Dendritic cell treated with granulocyte-macrophage colony-stimulating factor and Interleukin-4, amounts not matched to agents 40 ng/mL and 50 ng/mL, for 4 days (primary cell): ENCODE measurements at regions of chr15 and their contacts with region 1.

Region 1: DNA sequence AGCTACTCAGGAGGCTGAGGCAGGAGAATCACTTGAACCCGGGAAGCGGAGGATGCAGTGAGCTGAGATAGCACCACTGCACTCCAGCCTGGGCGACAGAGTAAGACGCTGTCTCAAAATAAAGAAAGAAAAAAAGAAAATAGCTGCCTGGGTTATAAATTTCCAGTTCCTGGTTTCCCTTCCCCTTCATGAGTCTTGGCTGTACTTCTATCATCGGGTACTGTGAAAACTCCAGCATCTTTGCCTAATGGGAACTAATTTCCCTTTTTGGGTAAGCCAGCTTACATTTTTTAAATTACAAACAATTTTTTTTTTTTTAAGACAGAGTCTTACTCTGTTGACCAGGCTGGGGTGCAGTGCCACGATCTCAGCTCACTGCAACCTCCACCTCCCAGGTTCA is 15.0 kb downstream of the DENND4A start:
- H3K4me3 Mint-ChIP-seq: peak overlapping the region; percentile 67
- H3K27ac Mint-ChIP-seq: peak overlapping the region; percentile 87
- H3K4me1 Mint-ChIP-seq: peaks cover 33% of the 10 kb centered on the region
- H3K27me3 Mint-ChIP-seq: no peaks in the 10 kb centered on the region

Region 2: GRCh38 chr15:65841121-65841925 is 64.3 kb after region 1 on chr15:
- intact Hi-C with region 1: loop called (anchors 5 kb)
- H3K4me3 Mint-ChIP-seq: peak overlapping the region; percentile 68
- H3K27ac Mint-ChIP-seq: peak overlapping the region; percentile 77
- H3K4me1 Mint-ChIP-seq: peaks cover 35% of the 10 kb centered on the region
- H3K27me3 Mint-ChIP-seq: no peaks in the 10 kb centered on the region

Region 3: GRCh38 chr15:65856821-65857455 is 79.9 kb after region 1 on chr15:
- intact Hi-C with region 1: loop called (anchors 5 kb)
- H3K4me3 Mint-ChIP-seq: no peak overlapping the region
- H3K27ac Mint-ChIP-seq: no peak overlapping the region
- H3K4me1 Mint-ChIP-seq: peaks cover 6% of the 10 kb centered on the region
- H3K27me3 Mint-ChIP-seq: no peaks in the 10 kb centered on the region